ENCODE measurements at regions of chr6 and their contacts with region 1.

Region 1: GRCh38 chr6:109482905-109483735 is at the start of gene ZBTB24:
- DNase-seq: peak; percentile 93
- H3K4me3 Mint-ChIP-seq: peak within 1 kb of the TSS; percentile 96
- H3K27ac Mint-ChIP-seq: peak within 1 kb of the TSS; percentile 90
- H3K4me1 Mint-ChIP-seq: peaks cover 48% of the 10 kb centered on the region
- H3K27me3 Mint-ChIP-seq: no peaks in the 10 kb centered on the region
- total RNA-seq, gene ZBTB24: 10.9 to 11.8 TPM

Region 2: DNA sequence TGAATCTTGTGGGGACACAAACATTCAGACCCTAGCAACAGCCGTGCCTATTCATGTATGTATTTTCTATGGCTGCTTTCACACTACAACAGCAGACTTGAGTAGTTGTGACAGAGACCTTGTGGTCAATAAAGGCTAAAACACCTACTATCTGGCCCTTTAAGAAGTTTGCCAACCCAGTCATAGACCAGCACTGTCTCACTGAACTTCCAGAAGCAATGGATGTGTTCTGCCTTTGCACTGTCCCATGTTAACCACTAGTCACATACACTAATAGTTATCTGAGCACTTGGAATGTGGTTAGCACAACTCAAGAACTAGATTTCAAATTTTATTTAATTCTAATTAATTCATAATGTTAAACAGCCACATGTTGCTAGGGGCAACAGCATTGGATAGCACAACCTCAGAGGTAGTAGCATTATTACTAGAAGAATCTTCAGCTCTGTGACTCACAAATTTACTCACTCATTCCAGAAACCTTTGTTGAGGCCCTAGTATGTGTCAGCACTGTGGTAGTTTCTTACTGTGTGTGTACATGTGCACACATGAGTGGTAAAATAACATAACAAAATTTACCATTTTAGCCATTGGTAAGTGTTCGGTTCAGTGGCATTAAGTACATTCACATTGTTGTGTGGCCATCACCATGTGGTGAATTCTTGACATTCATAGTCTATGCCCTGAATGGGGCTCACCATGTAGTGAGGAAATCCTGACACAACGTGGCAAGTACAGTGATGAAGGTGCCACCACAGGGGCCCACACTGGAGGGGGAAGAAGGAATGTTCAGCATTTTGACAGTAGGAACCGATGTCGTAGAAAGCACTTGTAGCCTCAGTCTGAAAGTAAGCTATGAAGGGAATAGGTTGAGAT is 280.5 kb before region 1 on chr6:
- CTCF ChIA-PET with region 1: no interaction called
- POLR2A ChIA-PET with region 1: no interaction called
- intact Hi-C with region 1: loop called (anchors 5 kb)
- DNase-seq: peak; percentile 38
- H3K4me3 Mint-ChIP-seq: no peak overlapping the region
- H3K27ac Mint-ChIP-seq: peak overlapping the region; percentile 53
- H3K4me1 Mint-ChIP-seq: peaks cover 17% of the 10 kb centered on the region
- H3K27me3 Mint-ChIP-seq: no peaks in the 10 kb centered on the region

Region 3: DNA sequence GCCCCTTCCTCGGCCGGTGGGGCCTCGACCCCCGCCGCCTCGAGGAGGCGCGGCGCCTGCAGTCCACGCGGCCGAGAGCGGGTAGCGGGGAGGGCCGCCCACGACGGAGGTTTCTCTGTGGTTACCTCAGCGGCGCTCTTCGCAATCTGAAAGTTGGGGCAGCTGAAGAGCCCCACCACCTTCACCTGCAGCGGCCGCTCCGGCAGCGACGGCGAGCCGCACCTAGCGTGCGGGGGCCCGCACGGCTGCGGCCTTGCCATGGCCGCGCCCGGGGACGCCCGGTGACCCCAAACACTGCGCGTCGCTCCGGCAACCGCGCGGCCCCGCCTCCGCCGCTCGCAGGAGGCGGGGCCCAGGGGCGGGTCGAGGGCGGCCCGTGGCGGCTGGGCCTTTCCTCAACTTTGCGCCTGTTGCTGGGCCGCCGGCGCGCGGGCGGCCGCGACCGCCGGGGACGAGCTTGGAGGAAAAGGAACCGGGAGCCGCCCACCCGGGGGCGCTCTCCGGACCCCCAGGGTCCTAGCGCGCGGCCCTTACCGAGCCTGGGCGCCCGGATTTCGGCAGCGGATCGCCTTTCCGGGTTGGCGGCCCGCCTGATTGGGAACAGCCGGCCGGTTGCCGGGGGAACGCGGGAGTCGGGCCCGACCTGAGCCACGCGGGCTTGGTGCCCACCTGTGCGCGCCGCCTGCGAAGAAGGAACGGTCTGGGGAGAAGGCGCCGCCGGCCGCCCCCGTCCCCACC is 42.6 kb before region 1 on chr6 and contains the starts of genes PPIL6 and SMPD2:
- CTCF ChIA-PET with region 1: interaction called, 8 read pairs
- POLR2A ChIA-PET with region 1: interaction called, 10 read pairs
- intact Hi-C with region 1: loop called (anchors 2 kb)
- DNase-seq: peak; percentile 84
- H3K4me3 Mint-ChIP-seq: peak within 1 kb of the TSS; percentile 87
- H3K27ac Mint-ChIP-seq: peak within 1 kb of the TSS; percentile 82
- H3K4me1 Mint-ChIP-seq: peaks cover 21% of the 10 kb centered on the region
- H3K27me3 Mint-ChIP-seq: no peaks in the 10 kb centered on the region
- total RNA-seq, gene PPIL6: 0.43 to 0.46 TPM
- total RNA-seq, gene SMPD2: 9.7 TPM

Region 4: DNA sequence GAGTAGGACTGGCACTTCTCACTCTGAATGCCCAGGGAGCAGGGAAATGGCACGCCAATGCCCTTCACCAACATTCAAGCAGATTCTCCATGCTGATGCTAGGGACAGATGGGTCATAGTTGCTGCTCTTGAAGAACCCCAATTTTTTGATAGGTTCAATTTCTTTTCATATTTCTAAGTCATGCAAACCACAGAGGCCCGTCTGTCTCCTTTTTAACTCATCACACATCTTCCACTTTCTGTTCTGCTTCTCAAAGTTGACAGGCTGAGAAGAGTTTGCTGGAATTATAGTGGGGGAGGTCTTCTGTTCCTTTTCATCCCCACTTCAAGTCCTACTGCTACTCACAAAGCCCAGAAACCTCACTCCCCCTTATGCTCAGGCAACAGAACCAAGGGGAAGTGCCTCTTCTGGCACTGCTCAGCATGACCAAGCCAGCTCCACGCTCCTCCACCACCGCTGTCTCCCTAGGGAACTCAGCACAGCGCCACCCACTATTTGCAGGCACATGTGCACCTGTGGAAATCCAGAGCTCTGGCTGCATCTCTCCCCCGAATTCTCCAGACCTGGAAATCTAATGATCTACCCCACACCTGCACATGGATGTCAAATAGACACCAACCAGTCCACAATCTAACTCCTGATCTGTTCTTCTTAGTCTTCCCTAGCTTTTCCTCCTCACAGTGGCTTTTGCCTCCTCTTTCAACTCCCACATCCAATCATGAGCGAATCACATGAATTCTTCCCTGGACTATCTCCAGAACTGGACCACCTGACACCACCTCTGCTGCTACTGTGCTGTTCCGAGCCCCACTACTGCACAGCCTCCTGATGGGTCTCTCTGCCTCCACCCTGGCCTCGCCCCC is 10.8 kb before region 1 on chr6:
- CTCF ChIA-PET with region 1: no interaction called
- POLR2A ChIA-PET with region 1: interaction called, 4 read pairs
- intact Hi-C with region 1: loop called (anchors 1 kb)
- DNase-seq: no peak
- H3K4me3 Mint-ChIP-seq: no peak overlapping the region
- H3K27ac Mint-ChIP-seq: peak overlapping the region; percentile 68
- H3K4me1 Mint-ChIP-seq: peaks cover 73% of the 10 kb centered on the region
- H3K27me3 Mint-ChIP-seq: no peaks in the 10 kb centered on the region

Region 5: GRCh38 chr6:109690737-109691621 is 207.9 kb after region 1 on chr6 and contains the starts of genes AK9 and FIG4:
- CTCF ChIA-PET with region 1: interaction called, 4 read pairs
- POLR2A ChIA-PET with region 1: no interaction called
- intact Hi-C with region 1: loop called (anchors 5 kb)
- DNase-seq: peak; percentile 95
- H3K4me3 Mint-ChIP-seq: peak within 1 kb of the TSS; percentile 96
- H3K27ac Mint-ChIP-seq: peak within 1 kb of the TSS; percentile 89
- H3K4me1 Mint-ChIP-seq: peaks cover 30% of the 10 kb centered on the region
- H3K27me3 Mint-ChIP-seq: no peaks in the 10 kb centered on the region
- total RNA-seq, gene AK9: 2.2 to 2.8 TPM
- total RNA-seq, gene FIG4: 17.3 to 18.2 TPM